GM23248 (cell line): ENCODE measurements at regions of chr7 and their contacts with region 1.

Region 1: GRCh38 chr7:7103343-7104313 is 78.7 kb upstream of the C1GALT1 start:
- DNase-seq: peak; percentile 78
- H3K4me3 ChIP-seq: peak overlapping the region; percentile 17; the same call in 1 of the 2 replicates
- H3K27ac ChIP-seq: no peak overlapping the region
- H3K4me1 ChIP-seq: peaks cover 12% of the 10 kb centered on the region
- H3K27me3 ChIP-seq: no peaks in the 10 kb centered on the region

Region 2: GRCh38 chr7:7002416-7003062 is 101.1 kb before region 1 on chr7:
- in situ Hi-C with region 1: no loop called
- DNase-seq: no peak
- H3K4me3 ChIP-seq: no peak overlapping the region
- H3K27ac ChIP-seq: no peak overlapping the region
- H3K4me1 ChIP-seq: no peaks in the 10 kb centered on the region
- H3K27me3 ChIP-seq: no peaks in the 10 kb centered on the region

Region 3: DNA sequence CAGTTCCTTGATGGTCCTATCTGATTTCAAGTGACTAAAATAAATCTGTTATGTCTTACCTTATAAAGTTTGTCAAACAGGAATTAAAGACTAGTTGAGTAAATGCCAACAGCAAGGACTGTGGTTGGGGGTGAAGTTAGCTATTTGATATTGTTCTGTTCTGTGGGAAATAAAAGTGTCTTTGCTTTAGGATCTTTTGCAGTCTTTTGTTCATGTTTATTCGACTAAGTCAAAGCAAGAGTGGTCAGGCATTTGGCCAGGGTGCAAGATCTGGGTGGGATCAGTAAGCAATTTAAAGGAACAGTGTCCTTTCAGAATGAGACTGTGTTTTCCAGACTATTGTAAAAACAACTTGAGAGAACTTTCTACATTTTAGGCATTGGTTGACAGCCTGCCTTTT is 432.1 kb after region 1 on chr7 and contains the start of gene COL28A1:
- in situ Hi-C with region 1: loop called (anchors 10 kb)
- DNase-seq: no peak
- H3K4me3 ChIP-seq: no peak within 1 kb of the TSS
- H3K27ac ChIP-seq: no peak within 1 kb of the TSS
- H3K4me1 ChIP-seq: no peaks in the 10 kb centered on the region
- H3K27me3 ChIP-seq: no peaks in the 10 kb centered on the region
- total RNA-seq, gene COL28A1: not detected in 2 replicates

Region 4: DNA sequence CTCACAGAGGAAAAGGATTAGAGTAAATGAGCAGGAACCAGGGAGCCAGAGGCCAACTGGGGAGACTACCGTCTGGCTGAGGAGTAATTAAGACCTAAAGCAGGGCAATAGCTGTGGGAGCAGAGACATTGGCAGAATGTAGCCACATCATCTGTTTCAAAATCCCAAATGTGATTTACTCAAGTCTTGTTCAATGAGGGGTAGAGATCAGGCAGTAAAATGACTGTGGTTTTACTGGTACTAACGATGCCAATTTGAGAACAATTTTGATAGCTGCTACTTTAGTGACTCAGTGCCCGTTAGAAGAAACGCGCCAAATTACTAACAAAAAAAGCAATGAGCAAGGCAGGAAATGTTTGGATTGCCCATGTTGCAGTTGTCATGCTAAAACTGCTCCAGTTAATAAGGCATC is 450.4 kb after region 1 on chr7:
- in situ Hi-C with region 1: loop called (anchors 10 kb)
- DNase-seq: peak; percentile 92
- H3K4me3 ChIP-seq: peak overlapping the region; percentile 38
- H3K27ac ChIP-seq: peak overlapping the region; percentile 83
- H3K4me1 ChIP-seq: peaks cover 25% of the 10 kb centered on the region
- H3K27me3 ChIP-seq: no peaks in the 10 kb centered on the region

Region 5: GRCh38 chr7:7653593-7654187 is 550.1 kb after region 1 on chr7:
- in situ Hi-C with region 1: no loop called
- DNase-seq: peak; percentile 23
- H3K4me3 ChIP-seq: no peak overlapping the region
- H3K27ac ChIP-seq: no peak overlapping the region
- H3K4me1 ChIP-seq: no peaks in the 10 kb centered on the region
- H3K27me3 ChIP-seq: no peaks in the 10 kb centered on the region